ENCODE measurements at regions of chr6 and their contacts with region 1.

Region 1: DNA sequence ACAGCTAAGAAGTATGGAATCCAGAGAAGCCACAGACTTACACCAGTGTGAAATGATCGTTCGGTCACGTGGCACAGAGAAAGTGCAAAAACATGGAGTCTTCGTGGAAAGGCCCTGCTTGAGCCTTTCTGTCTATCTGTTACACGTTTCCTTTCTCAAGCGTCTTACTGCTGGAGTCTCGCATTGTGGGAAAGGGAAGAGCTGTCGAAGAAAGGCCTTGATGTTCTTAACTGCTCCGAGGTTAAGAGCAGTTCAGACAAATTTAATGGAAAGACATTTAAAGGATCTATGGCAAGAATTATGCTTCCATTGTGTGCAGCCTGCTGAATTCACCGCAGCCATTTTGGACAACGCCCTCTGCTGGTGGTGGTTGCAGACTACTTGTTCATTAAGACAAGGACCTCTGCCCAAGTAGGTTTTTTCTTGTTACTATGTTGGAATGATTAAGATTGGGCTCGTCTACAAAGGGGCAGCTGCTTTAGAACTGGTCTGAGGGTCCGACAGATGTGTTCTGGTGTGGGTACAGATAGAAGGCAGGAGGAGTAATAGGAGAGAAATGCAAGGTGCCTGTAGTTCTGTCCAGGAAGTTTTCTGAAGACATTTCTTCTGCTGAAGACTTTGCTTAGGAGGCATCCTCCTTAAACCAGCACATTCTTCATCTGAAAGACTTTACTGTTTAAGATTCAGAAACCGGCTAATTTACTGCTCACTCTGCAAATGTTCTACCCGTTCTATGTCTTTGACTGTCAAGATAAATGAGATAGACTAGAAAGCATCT is 24.7 kb upstream of the CCN6 start:
- DNase-seq: peak; percentile 81
- ATAC-seq: no peak
- H3K4me3 Mint-ChIP-seq: no peak overlapping the region
- H3K27ac Mint-ChIP-seq: peak overlapping the region; percentile 48
- H3K4me1 Mint-ChIP-seq: peaks cover 33% of the 10 kb centered on the region
- H3K27me3 Mint-ChIP-seq: peaks cover 4% of the 10 kb centered on the region

Region 2: DNA sequence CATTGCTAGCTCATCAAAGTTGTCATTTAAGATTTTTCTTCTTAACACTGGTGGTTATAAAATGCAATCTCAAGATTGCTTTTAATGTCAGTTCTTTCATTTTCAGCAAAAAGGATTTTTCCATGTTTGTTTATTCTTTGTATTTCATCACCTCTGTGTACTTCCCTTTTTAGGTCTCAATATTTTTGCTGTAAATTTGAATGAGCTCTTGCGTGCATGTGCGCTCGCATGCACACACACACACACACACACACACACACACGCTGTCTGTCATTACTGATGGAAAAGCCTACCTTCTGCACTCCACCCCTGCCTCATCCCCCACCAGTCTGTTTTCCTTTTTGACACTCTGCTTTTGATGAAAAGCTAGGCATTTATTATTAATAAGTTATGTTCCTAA is 70.7 kb before region 1 on chr6:
- CTCF ChIA-PET with region 1: no interaction called
- DNase-seq: no peak
- ATAC-seq: no peak
- H3K4me3 Mint-ChIP-seq: no peak overlapping the region
- H3K27ac Mint-ChIP-seq: no peak overlapping the region
- H3K4me1 Mint-ChIP-seq: no peaks in the 10 kb centered on the region
- H3K27me3 Mint-ChIP-seq: peaks cover 6% of the 10 kb centered on the region

Region 3: GRCh38 chr6:111980971-111981840 is 48.0 kb before region 1 on chr6:
- CTCF ChIA-PET with region 1: no interaction called
- DNase-seq: no peak
- ATAC-seq: no peak
- H3K4me3 Mint-ChIP-seq: no peak overlapping the region
- H3K27ac Mint-ChIP-seq: no peak overlapping the region
- H3K4me1 Mint-ChIP-seq: peaks cover 11% of the 10 kb centered on the region
- H3K27me3 Mint-ChIP-seq: peaks cover 2% of the 10 kb centered on the region

Region 4: DNA sequence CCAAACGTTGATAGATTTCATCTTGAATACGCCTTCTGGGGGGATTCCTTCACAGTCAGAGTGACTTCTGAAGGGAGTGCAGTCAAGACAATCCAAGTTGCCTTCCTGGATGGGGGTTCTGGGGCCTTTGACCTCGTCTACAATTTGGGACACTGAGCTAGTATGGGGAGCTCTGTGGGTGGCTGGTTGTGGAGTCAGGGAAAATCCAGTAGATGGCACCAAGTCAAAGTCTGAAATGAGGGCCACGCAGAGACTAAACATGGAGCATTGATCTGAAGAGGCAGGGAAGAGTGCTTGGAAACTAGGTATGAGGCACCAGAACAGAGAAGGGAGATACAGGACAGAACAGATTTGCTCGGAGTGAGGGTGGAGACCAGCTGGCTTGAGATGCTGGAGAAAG is 18.9 kb before region 1 on chr6:
- CTCF ChIA-PET with region 1: interaction called, 19 read pairs
- DNase-seq: no peak
- ATAC-seq: peak; percentile 39
- H3K4me3 Mint-ChIP-seq: no peak overlapping the region
- H3K27ac Mint-ChIP-seq: no peak overlapping the region
- H3K4me1 Mint-ChIP-seq: no peaks in the 10 kb centered on the region
- H3K27me3 Mint-ChIP-seq: no peaks in the 10 kb centered on the region

Region 5: GRCh38 chr6:112018619-112019416 is 10.4 kb before region 1 on chr6:
- CTCF ChIA-PET with region 1: interaction called, 11 read pairs
- DNase-seq: no peak
- ATAC-seq: no peak
- H3K4me3 Mint-ChIP-seq: no peak overlapping the region
- H3K27ac Mint-ChIP-seq: no peak overlapping the region
- H3K4me1 Mint-ChIP-seq: peaks cover 9% of the 10 kb centered on the region
- H3K27me3 Mint-ChIP-seq: no peaks in the 10 kb centered on the region

Region 6: GRCh38 chr6:112061605-112062004 is 32.4 kb after region 1 on chr6:
- CTCF ChIA-PET with region 1: no interaction called
- DNase-seq: no peak
- ATAC-seq: no peak
- H3K4me3 Mint-ChIP-seq: no peak overlapping the region
- H3K27ac Mint-ChIP-seq: no peak overlapping the region
- H3K4me1 Mint-ChIP-seq: no peaks in the 10 kb centered on the region
- H3K27me3 Mint-ChIP-seq: peaks cover 8% of the 10 kb centered on the region

Region 7: DNA sequence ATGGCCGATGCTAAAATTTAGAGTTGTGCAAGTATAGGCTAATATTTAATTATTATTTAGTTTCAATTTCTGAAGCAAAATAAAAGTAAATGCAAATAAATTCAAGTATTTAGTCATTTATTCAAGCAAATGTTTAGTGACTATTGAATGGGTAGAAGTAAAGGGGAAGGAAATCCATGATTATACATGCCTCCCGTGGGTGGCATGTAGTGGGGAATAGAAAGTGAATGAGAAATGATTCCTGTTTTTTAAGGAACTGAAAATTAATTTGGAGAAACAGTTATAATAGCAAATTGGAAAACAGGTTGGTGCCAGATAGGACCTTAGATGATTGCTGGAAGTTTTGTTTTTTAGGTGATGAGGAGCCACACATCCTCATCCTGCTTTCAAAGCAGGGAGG is 93.5 kb after region 1 on chr6:
- CTCF ChIA-PET with region 1: no interaction called
- DNase-seq: no peak
- ATAC-seq: no peak
- H3K4me3 Mint-ChIP-seq: no peak overlapping the region
- H3K27ac Mint-ChIP-seq: no peak overlapping the region
- H3K4me1 Mint-ChIP-seq: peaks cover 9% of the 10 kb centered on the region
- H3K27me3 Mint-ChIP-seq: peaks cover 12% of the 10 kb centered on the region

Measured in activated CD8-positive, alpha-beta memory T cell treated with anti-CD3 and anti-CD28 coated beads, Interleukin-2, amount 10 ng/mL, durations not matched to agents 7 days and 5 days (primary cell).